Astrocyte of the cerebellum (primary cell): ENCODE measurements at regions of chr12 and their contacts with region 1.

Region 1: GRCh38 chr12:49942921-49943624 is 7.5 kb upstream of the AQP2 start:
- DNase-seq: no peak
- H3K4me3 ChIP-seq: no peak overlapping the region
- CTCF ChIP-seq: no peak

Region 2: DNA sequence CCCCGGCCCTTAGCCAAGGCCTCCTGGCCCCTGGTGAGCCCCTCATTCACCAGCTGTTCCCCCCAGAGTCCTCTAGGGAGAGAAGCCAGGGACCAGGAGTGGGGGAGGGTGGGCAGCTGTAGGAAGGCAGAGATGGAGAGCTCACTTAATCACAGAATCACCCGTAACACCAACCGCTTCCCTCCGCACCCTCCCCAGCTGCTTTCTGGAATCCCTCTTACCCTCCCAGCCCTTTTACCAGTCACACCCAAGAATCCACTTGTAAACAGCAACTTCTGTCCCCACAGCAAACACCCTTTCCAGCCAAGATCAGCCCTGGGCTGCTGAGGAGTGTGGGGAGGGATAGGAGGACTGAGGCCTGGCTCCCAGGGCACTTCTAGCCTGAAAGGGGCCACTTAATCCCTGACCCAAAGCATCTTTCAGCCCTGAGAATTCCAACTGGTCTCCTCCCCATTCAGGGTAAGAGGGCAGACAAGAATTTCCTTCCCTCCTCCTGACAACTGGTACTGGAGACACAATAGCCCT is 133.6 kb before region 1 on chr12:
- in situ Hi-C with region 1: no loop called
- DNase-seq: no peak
- H3K4me3 ChIP-seq: no peak overlapping the region
- CTCF ChIP-seq: no peak

Region 3: DNA sequence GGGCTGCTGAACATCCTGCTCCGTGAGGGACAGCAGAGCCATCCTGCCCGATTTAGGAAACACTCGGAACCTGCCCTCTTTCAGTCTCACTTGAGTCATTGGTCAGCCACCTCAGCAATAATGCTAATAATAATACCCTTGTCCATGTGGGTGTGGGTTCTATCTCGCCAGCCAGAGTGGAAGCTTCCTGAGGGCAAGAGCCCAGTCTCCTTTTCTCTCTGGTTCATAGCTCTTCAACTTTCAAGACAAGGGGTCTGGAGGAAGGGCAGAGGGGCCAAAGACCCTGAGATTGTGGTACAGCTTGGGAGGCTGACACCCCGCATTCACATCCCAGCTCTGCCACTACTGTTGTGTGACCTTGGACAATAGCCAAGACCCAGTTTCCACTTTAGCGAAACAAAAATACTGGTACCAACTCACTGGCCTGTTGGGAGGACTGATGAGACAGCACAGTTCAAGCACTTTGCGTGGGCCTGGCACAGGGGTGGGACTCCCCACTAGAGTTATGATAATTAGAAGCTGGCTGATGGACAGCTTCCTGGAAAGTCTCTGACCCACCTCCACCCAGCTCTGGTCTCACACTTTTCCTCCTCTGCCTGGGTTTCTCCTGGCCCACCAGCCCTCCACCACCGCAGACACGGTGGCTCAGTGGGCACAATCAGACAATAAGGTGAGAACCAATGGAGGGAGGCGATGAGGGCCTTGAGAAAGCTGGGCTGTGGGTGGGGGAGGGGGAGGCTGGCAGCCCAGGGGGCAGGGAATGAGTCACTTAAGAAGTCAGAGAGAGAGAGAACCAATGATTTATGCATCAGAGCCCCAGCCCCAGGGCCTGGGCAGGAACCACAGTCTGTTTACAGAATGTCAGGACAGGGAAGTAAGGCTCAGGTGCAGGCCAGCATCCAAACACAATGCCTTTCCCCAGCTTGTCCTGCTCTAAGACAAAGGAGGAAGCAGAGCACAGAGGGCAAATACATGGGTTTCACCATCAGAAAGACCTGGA is 49.0 kb before region 1 on chr12:
- in situ Hi-C with region 1: loop called (anchors 5 kb)
- DNase-seq: no peak
- H3K4me3 ChIP-seq: no peak overlapping the region
- CTCF ChIP-seq: no peak

Region 4: GRCh38 chr12:49998453-49998852 is 55.4 kb after region 1 on chr12:
- in situ Hi-C with region 1: no loop called
- DNase-seq: no peak
- H3K4me3 ChIP-seq: no peak overlapping the region
- CTCF ChIP-seq: no peak

Region 5: GRCh38 chr12:51293696-51294095 is 1350.6 kb after region 1 on chr12:
- in situ Hi-C with region 1: no loop called
- DNase-seq: no peak
- H3K4me3 ChIP-seq: no peak overlapping the region
- CTCF ChIP-seq: no peak